Uterus (tissue), 4 donors: ENCODE measurements at regions of chr7 and their contacts with region 1.

Region 1: GRCh38 chr7:39894904-39895303 is 55.2 kb upstream of the CDK13 start:
- DNase-seq: no peak
- H3K4me3 ChIP-seq: no peak overlapping the region
- H3K27ac ChIP-seq: no peak overlapping the region
- H3K4me1 ChIP-seq: no peaks in the 10 kb centered on the region
- H3K27me3 ChIP-seq: no peaks in the 10 kb centered on the region
- CTCF ChIP-seq: no peak
- POLR2A ChIP-seq: no peak

Region 2: DNA sequence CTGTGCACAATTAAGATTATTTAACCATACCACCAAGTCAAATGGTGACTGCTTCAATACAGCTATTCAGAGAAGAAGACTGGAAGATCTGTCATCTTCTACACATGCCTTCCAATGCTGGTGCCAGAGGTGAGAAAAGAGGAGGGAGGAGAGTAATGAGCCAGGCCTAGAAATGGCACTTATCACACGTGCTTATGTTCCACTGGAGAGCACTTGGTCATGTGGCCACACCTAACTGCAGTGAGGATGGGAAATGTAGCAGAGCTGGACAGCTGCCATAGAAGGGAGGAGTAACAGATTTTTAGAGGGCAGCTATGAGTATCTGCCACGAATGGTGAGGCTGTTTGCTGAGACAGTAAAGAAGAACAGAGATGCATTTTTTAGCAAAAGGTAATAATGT is 162.4 kb after region 1 on chr7:
- intact Hi-C with region 1: loop called (anchors 10 kb)
- DNase-seq: no peak
- H3K4me3 ChIP-seq: no peak overlapping the region
- H3K27ac ChIP-seq: no peak overlapping the region
- H3K4me1 ChIP-seq: no peaks in the 10 kb centered on the region
- H3K27me3 ChIP-seq: no peaks in the 10 kb centered on the region
- CTCF ChIP-seq: no peak
- POLR2A ChIP-seq: no peak